ENCODE measurements at regions of chr20 and their contacts with region 1.

Region 1: DNA sequence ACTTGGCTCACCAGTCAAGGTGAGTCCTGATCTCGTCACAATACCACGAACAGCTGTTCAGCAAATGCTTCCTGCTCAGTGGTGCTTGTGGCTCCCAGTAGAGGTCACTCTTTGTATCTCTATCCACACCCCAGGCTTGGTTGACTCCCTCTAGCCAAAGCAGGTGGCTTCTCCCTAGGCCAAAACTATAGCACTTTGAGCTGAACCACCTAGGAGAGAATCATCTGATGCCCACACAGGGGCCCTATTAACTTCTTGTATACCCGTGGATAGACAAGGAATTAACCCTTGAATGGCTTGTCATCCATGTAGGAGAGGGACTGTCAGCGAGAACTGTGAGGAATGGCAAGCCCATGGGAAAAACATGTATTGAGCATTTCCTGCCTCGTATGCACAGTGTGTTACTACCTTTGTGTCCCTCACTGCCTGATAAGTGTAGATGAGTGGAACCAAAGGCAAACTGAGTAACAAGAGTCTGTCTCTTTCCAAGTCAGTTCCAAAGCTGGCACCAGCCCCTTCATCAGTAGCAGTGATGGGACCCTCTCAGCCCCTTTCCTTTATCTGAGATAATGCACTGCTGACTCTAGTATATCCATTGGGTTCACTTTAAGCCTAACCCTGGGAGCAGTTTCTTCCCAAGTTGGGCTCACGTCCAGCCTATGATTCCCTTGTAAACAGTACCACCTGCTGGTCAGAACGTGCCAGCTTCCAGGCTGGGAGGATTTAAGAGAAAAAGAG is 42.5 kb downstream of the EIF2S2 start:
- DNase-seq: peak; percentile 72
- H3K4me3 Mint-ChIP-seq: no peak overlapping the region
- H3K27ac Mint-ChIP-seq: no peak overlapping the region
- H3K4me1 Mint-ChIP-seq: peaks cover 28% of the 10 kb centered on the region
- H3K27me3 Mint-ChIP-seq: no peaks in the 10 kb centered on the region

Region 2: DNA sequence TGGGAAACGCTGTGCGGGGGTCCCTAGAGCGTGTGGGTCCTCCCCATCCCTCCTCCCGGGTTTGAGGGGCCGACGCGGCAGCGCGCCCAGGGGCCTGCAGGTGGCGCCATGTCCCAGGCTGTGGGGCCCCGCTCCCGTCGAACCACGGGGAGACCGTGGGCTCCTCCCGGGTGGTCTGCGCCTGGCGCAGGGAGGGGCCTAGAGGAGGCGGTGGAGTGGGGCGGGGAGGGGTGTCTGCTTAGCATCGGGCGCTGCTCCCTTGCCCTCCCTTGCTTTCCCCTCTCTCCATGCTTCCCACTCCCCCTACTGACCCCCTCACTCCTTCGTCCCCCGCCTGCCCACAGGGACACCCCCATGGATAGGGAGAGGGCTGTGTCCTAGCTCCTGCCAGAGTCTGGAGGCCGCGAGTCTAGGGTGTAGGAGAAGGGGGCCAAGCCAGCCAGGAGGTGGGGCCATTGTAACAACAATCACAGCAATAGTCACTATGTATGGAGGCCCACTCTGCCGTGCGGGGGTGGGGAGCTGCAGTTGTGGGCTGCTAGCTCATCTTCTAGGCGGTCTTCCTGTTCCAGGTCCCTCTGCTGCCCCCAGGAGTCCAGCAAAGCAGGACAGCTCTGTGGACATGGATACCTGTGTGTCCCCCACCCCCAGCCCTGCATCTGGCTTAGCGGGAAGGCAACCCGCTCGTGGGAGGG is 206.7 kb before region 1 on chr20:
- CTCF ChIA-PET with region 1: interaction called, 6 read pairs
- intact Hi-C with region 1: loop called (anchors 1 kb)
- DNase-seq: peak; percentile 57
- H3K4me3 Mint-ChIP-seq: no peak overlapping the region
- H3K27ac Mint-ChIP-seq: no peak overlapping the region
- H3K4me1 Mint-ChIP-seq: peaks cover 19% of the 10 kb centered on the region
- H3K27me3 Mint-ChIP-seq: no peaks in the 10 kb centered on the region

Region 3: GRCh38 chr20:33933469-33933909 is 136.0 kb before region 1 on chr20:
- CTCF ChIA-PET with region 1: interaction called, 27 read pairs
- intact Hi-C with region 1: loop called (anchors 1 kb)
- DNase-seq: peak; percentile 83
- H3K4me3 Mint-ChIP-seq: no peak overlapping the region
- H3K27ac Mint-ChIP-seq: no peak overlapping the region
- H3K4me1 Mint-ChIP-seq: no peaks in the 10 kb centered on the region
- H3K27me3 Mint-ChIP-seq: no peaks in the 10 kb centered on the region

Region 4: GRCh38 chr20:33947709-33948295 is 121.7 kb before region 1 on chr20:
- CTCF ChIA-PET with region 1: interaction called, 3 read pairs
- intact Hi-C with region 1: loop called (anchors 1 kb)
- DNase-seq: peak; percentile 75
- H3K4me3 Mint-ChIP-seq: no peak overlapping the region
- H3K27ac Mint-ChIP-seq: no peak overlapping the region
- H3K4me1 Mint-ChIP-seq: no peaks in the 10 kb centered on the region
- H3K27me3 Mint-ChIP-seq: peaks cover 3% of the 10 kb centered on the region

Region 5: DNA sequence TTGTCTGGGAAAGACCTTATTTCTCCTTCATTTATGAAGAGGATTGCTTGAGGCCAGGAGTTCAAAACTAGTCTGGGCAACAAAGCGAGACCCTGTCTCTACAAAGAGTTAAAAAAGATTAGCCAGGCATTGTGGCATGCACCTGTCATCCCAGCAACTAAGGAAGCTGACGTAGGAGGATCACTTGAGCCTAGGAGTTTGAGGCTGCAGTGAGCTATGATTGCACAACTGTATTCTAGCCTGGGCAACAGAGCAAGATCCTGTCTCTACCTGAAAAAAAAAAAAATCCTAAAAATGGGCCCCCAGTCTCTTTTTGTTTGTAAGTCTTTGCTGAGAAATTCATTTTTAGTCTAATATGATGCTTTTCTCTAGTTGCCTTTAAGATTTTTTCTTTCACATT is 71.8 kb after region 1 on chr20:
- CTCF ChIA-PET with region 1: no interaction called
- intact Hi-C with region 1: no loop called
- DNase-seq: no peak
- H3K4me3 Mint-ChIP-seq: no peak overlapping the region
- H3K27ac Mint-ChIP-seq: no peak overlapping the region
- H3K4me1 Mint-ChIP-seq: no peaks in the 10 kb centered on the region
- H3K27me3 Mint-ChIP-seq: peaks cover 2% of the 10 kb centered on the region